Tibial artery (tissue), 4 donors: ENCODE measurements at regions of chr19 and their contacts with region 1.

Region 1: DNA sequence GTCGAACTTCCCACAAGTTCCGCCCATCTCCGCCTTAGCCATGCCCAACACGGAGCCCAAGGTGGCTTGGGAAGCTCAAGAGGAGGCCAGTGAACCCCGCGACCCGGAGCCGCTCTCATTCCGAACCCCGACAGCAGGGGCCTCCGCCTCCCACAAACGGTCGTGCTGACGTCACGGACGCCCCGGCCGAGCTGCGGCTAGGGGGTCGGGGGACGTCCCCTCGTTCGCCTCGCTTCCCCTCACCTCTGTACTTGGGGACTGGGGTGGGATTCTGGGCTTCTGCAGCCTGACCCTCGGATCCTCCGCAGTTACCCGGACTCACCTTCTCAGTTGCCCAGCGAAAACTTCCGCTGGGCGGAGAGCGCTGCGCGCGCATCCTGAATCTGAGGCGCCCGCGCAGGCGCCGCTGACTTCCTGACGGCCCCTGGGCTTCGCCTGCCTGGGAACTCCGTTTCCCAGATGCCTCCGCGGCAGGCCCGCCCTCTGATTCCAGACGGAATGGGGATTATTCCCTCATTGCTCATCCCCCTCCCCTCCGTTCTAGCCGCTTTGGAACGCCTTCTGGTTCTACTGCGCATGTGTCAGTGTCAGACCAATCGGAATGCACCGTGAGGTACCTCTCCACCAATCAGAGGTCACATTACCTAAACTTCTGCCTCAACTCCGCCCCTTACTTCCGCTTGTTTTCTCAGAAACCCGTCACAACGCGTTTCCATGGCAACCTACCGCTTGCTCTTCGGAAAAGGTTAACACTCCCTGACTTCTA is at the start of gene VRK3:
- DNase-seq: peak; percentile 99 to 100
- H3K4me3 ChIP-seq: peak within 1 kb of the TSS; percentile 70 to 80
- H3K27ac ChIP-seq: peak within 1 kb of the TSS; percentile 88 to 91
- H3K4me1 ChIP-seq: peaks cover 0 to 35% (median 22%) of the 10 kb centered on the region in 4 donors
- H3K27me3 ChIP-seq: no peaks in the 10 kb centered on the region
- CTCF ChIP-seq: peak in 1 of 2 experiments; percentile 28

Region 2: DNA sequence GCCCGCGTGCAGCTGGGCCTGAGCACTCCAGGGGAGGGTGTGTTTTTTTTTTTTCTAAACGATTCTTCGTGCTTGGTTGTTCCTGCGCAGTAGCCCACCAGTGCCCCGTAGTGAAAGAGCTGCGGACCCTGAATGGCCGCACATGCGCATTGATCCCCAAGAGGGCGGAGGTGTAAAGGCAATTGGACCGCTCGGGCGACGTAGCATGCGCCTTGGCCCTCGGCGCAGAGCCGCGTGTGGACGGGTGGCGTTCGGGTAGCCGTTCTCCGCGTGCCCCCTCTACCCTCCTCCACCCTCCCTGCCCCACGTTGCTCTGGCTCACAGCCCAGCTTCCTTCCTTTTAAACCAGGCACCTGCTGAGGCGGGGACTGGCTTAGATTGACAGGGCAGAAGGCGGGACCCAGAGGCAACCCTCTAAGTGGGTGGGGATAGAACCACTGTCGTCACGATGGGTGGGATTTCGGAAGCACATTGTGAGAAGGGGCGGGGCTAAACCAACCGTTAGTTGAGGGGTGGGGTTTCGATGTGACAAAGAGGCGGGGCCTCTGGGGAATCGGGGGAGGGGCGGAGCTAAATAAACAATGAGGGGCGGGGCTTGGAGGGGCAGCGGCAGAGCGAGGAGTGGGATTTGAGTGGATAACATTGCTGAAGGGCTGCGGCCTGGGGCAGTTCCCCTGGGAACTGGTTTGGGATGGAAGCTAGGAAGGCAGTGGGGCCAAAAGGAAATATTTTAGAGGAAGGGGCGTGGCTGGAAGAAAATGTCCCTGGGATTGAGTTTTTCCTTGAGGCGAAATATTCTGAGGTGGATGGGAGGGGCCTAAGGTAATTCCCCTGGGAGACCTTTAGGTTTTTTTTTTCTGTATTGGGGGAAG is 95.4 kb before region 1 on chr19:
- intact Hi-C with region 1: loop called (anchors 5 kb)
- DNase-seq: peak; percentile 87 to 93
- H3K4me3 ChIP-seq: peak overlapping the region; percentile 71 to 94
- H3K27ac ChIP-seq: peak overlapping the region; percentile 79 to 91
- H3K4me1 ChIP-seq: peaks cover 0 to 32% (median 18%) of the 10 kb centered on the region in 4 donors
- H3K27me3 ChIP-seq: no peaks in the 10 kb centered on the region
- CTCF ChIP-seq: peak in 1 of 2 experiments; percentile 32

Region 3: DNA sequence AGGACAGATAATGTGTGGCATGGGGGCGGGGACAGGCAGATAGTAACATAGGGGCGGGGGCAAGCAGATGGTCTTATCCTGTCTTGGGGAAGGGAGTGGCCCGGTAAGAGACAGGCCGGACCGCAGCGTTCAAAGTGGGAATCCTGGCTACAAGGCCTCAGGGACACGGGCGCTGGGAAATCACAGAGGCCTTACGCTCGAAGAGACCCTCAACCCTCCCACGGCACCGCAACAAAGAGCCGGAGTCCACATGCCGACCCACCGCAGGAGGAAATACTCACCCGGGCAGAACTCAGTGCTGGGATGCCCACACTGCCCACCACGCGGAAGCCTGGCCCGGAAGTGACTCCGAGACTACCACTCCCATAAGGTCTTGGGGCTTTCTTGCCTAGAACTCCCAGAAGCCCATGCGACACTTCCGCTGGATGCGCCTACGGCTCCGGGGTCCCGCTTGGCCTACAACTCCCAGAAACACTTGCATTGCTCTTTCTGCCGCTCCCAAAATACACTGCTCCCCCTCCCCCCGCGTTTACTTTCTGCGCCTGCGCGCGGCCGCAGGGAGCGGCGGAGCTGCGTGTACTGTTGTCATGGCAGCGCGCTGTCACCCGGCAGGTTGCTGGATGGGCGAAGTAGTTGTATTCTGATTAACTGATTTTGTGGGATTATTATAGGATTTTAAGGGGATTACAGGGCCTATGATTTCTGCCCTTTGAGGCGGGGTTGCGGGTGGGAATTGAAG is 1083.0 kb after region 1 on chr19 and contains the start of gene CTU1:
- intact Hi-C with region 1: loop called (anchors 10 kb)
- DNase-seq: peak; percentile 98 to 99
- H3K4me3 ChIP-seq: peak within 1 kb of the TSS; percentile 70 to 71
- H3K27ac ChIP-seq: peak within 1 kb of the TSS; percentile 56 to 68
- H3K4me1 ChIP-seq: peaks cover 0 to 19% (median 14%) of the 10 kb centered on the region in 4 donors
- H3K27me3 ChIP-seq: peaks cover 0 to 2% of the 10 kb centered on the region in 2 donors
- CTCF ChIP-seq: peak in 1 of 2 experiments; percentile 36